CD8-positive, alpha-beta T cell (primary cell): ENCODE measurements at regions of chr6 and their contacts with region 1.

Region 1: GRCh38 chr6:2733324-2733723 is 17.4 kb downstream of the MYLK4 start:
- DNase-seq: peak in 5 of 9 experiments; percentile 4 to 66 (median 11)
- ATAC-seq: peak; percentile 85
- H3K4me3 ChIP-seq: no peak overlapping the region
- H3K4me3 Mint-ChIP-seq: no peak overlapping the region
- H3K27ac ChIP-seq: no peak overlapping the region
- H3K27ac Mint-ChIP-seq: no peak overlapping the region
- H3K4me1 ChIP-seq: no peaks in the 10 kb centered on the region
- H3K4me1 Mint-ChIP-seq: no peaks in the 10 kb centered on the region
- H3K27me3 ChIP-seq: no peaks in the 10 kb centered on the region
- H3K27me3 Mint-ChIP-seq: peaks cover 2% of the 10 kb centered on the region
- CTCF ChIP-seq: no peak

Region 2: DNA sequence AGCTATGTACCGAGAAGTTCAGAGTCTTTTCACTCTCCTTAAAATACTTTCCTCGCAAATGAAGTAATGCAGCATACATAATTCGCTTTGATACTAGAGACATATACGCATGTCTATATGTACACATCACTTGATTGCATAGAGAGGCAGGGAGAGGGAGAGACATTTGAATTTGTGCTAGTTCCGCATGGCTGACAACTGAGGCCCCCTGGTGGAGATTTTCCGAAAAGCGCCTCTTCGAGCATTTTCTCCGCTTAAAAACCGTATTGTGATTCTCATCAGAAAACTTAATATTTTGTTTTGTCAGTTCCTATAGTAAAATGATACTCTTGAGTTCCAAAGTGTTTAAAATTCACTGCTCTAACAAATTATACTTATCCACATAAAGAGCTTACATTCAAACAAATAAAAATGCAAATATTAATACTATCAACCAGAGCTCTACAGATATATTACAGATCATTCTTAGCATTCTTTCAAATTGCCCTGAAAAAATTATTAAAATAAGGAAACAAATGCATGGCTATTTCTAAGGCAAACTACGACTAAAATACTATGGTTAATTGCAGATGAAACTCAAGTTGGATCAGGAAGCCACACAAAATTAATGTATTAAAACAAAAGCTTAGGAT is 16.8 kb after region 1 on chr6:
- CTCF ChIA-PET with region 1: interaction called, 110 read pairs
- POLR2A ChIA-PET with region 1: interaction called, 4 read pairs
- intact Hi-C with region 1: loop called in 1 of 2 experiments (anchors 1 kb)
- DNase-seq: peak; percentile 46 to 78 (median 71)
- ATAC-seq: peak; percentile 86
- H3K4me3 ChIP-seq: no peak overlapping the region
- H3K4me3 Mint-ChIP-seq: no peak overlapping the region
- H3K27ac ChIP-seq: no peak overlapping the region
- H3K27ac Mint-ChIP-seq: no peak overlapping the region
- H3K4me1 ChIP-seq: peaks cover 8% of the 10 kb centered on the region
- H3K4me1 Mint-ChIP-seq: peaks cover 6% of the 10 kb centered on the region
- H3K27me3 ChIP-seq: peaks cover 0 to 2% of the 10 kb centered on the region in 2 experiments
- H3K27me3 Mint-ChIP-seq: peaks cover 5% of the 10 kb centered on the region
- CTCF ChIP-seq: peak; percentile 99

Region 3: GRCh38 chr6:3147914-3148757 is 414.8 kb after region 1 on chr6:
- CTCF ChIA-PET with region 1: no interaction called
- POLR2A ChIA-PET with region 1: no interaction called
- intact Hi-C with region 1: no loop called
- DNase-seq: no peak
- ATAC-seq: no peak
- H3K4me3 ChIP-seq: no peak overlapping the region
- H3K4me3 Mint-ChIP-seq: no peak overlapping the region
- H3K27ac ChIP-seq: no peak overlapping the region
- H3K27ac Mint-ChIP-seq: no peak overlapping the region
- H3K4me1 ChIP-seq: no peaks in the 10 kb centered on the region
- H3K4me1 Mint-ChIP-seq: no peaks in the 10 kb centered on the region
- H3K27me3 ChIP-seq: no peaks in the 10 kb centered on the region
- H3K27me3 Mint-ChIP-seq: no peaks in the 10 kb centered on the region
- CTCF ChIP-seq: no peak